Activated CD4-positive, alpha-beta T cell treated with anti-CD3 and anti-CD28 coated beads, Interleukin-2, amount 10 ng/mL, durations not matched to agents 7 days and 5 days (primary cell): ENCODE measurements at regions of chr20 and their contacts with region 1.

Region 1: DNA sequence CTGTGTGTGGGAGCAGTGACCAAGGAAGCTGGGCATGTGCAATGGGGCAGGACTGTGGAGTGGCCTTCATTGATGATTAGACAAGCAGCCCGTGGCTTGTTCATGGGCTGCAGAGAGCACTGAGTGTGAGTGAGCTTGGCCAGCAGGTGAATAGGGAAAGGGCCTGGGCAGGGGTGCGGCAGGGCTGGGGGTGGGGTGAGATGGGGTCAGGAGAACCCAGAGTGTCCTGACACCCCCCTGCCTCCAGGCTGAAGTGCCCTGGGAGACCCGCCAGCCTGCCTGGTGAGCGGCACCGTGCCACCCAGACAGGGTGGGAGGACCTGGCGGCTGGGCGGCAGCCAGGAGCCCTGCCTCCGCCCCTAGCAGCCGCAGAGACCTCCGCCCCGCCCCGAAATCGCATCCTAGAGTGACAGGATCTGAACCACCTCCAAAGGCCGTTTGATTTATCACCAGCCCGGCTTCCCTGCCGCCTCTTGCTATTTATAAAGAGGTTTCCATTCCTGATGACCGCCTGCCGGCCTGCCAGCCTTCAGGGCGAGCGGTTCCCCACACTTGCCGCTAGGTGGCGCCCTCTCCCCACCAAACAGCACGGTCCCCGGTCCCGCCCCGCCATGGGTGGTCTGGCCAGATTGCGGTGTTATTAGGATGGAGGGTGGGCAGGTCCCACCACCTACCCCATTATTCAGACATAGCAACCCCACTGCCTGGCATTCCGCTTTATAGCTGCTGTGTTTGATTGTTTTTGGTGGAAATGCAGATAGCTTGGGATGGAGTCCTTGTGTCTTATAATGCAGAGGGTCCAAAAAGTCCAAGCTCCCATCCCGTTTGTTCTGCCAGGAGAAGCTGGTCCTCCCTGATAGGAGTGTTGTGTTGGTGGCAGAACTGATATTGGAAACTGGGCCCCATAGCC is 3.5 kb downstream of the MYLK2 start:
- DNase-seq: peak; percentile 75
- H3K4me3 Mint-ChIP-seq: no peak overlapping the region
- H3K27ac Mint-ChIP-seq: no peak overlapping the region
- H3K4me1 Mint-ChIP-seq: peaks cover 2% of the 10 kb centered on the region
- H3K27me3 Mint-ChIP-seq: no peaks in the 10 kb centered on the region

Region 2: GRCh38 chr20:31835977-31836852 is 13.5 kb after region 1 on chr20:
- CTCF ChIA-PET with region 1: interaction called, 18 read pairs
- POLR2A ChIA-PET with region 1: no interaction called
- DNase-seq: peak; percentile 23
- H3K4me3 Mint-ChIP-seq: no peak overlapping the region
- H3K27ac Mint-ChIP-seq: peak overlapping the region; percentile 48
- H3K4me1 Mint-ChIP-seq: peaks cover 14% of the 10 kb centered on the region
- H3K27me3 Mint-ChIP-seq: no peaks in the 10 kb centered on the region

Region 3: DNA sequence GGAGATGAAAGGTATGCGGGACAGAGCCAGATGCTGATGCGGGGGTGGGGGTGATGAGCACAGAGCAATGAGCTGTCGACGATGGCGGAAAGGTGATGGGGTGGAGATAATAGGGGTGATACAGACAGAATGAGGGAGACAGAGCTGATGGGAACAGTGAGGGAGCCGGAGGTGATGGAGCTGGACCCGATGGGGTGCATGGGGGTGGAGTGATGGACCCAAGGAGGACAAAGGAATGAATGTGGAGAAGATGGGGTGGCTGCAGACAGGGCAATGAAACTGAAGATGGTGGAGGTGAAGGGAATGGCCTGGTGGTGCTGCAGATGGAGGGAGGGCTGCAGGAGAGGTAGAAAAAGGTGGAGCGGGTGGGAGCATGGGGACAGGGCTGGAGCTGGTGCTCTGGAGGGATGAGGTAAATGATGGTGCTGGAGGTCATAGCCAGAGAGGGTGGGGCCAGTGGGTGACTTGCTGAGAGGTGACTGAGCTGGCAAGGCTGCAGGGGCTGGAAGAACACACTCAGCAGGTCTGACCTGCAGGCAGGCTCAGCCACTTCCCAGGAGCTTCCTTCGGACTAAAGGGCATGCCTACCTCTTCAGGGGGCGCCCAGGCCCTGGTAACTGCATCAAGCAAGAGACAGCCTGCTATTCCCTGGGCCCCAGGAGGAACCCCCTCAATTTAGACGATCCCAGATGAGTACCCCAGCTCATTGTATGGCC is 28.7 kb after region 1 on chr20:
- CTCF ChIA-PET with region 1: interaction called, 12 read pairs
- POLR2A ChIA-PET with region 1: no interaction called
- DNase-seq: no peak
- H3K4me3 Mint-ChIP-seq: no peak overlapping the region
- H3K27ac Mint-ChIP-seq: no peak overlapping the region
- H3K4me1 Mint-ChIP-seq: no peaks in the 10 kb centered on the region
- H3K27me3 Mint-ChIP-seq: peaks cover 10% of the 10 kb centered on the region

Region 4: GRCh38 chr20:31930779-31931178 is 108.1 kb after region 1 on chr20:
- CTCF ChIA-PET with region 1: no interaction called
- POLR2A ChIA-PET with region 1: no interaction called
- DNase-seq: no peak
- H3K4me3 Mint-ChIP-seq: no peak overlapping the region
- H3K27ac Mint-ChIP-seq: no peak overlapping the region
- H3K4me1 Mint-ChIP-seq: no peaks in the 10 kb centered on the region
- H3K27me3 Mint-ChIP-seq: peaks cover 19% of the 10 kb centered on the region